ENCODE measurements at regions of chr1 and their contacts with region 1.

Region 1: GRCh38 chr1:56709269-56709880 is 64.3 kb downstream of the PRKAA2 start:
- DNase-seq: no peak
- H3K4me3 ChIP-seq: no peak overlapping the region
- H3K27ac ChIP-seq: no peak overlapping the region
- H3K4me1 ChIP-seq: no peaks in the 10 kb centered on the region
- H3K27me3 ChIP-seq: no peaks in the 10 kb centered on the region
- CTCF ChIP-seq: peak; percentile 26 to 56 (median 45)

Region 2: GRCh38 chr1:55284852-55285251 is 1424.5 kb before region 1 on chr1:
- intact Hi-C with region 1: loop called (anchors 1 kb)
- DNase-seq: no peak
- H3K4me3 ChIP-seq: no peak overlapping the region
- H3K27ac ChIP-seq: no peak overlapping the region
- H3K4me1 ChIP-seq: no peaks in the 10 kb centered on the region
- H3K27me3 ChIP-seq: no peaks in the 10 kb centered on the region
- CTCF ChIP-seq: peak; percentile 40 to 72 (median 51)

Region 3: DNA sequence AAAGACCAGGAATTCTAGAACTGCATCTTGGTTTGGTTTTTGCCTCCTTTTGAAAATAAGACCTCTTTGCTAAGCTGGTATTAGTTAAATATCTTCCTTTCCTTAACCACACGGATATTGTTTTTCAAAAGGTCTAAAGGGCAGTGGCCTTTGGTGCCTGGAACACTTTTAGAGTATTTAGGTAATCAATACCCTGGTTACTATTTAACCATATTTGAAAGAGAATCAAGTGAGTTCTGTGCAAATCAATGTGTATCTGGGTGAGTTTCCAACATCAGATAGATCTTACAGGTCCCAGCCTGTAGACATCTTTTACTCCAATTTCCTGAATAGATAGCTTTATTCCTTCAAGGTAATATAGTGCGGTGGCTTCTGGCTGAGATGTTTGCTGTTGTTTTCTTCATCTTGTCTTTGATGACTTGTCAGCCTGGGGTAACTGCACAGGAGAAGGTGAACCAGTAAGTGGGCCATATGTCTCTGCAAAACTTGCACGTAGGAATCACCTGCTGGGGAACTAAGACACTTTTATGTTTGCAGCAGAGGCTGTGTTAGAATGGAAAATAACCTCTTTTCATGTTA is 145.2 kb after region 1 on chr1 and contains the start of gene C8A:
- intact Hi-C with region 1: no loop called
- DNase-seq: no peak
- H3K4me3 ChIP-seq: no peak within 1 kb of the TSS
- H3K27ac ChIP-seq: no peak within 1 kb of the TSS
- H3K4me1 ChIP-seq: no peaks in the 10 kb centered on the region
- H3K27me3 ChIP-seq: no peaks in the 10 kb centered on the region
- CTCF ChIP-seq: no peak
- total RNA-seq, gene C8A: 0.21 TPM

Measured in ascending aorta (tissue), 2 donors.